PC-3 (cell line): ENCODE measurements at regions of chr5 and their contacts with region 1.

Region 1: DNA sequence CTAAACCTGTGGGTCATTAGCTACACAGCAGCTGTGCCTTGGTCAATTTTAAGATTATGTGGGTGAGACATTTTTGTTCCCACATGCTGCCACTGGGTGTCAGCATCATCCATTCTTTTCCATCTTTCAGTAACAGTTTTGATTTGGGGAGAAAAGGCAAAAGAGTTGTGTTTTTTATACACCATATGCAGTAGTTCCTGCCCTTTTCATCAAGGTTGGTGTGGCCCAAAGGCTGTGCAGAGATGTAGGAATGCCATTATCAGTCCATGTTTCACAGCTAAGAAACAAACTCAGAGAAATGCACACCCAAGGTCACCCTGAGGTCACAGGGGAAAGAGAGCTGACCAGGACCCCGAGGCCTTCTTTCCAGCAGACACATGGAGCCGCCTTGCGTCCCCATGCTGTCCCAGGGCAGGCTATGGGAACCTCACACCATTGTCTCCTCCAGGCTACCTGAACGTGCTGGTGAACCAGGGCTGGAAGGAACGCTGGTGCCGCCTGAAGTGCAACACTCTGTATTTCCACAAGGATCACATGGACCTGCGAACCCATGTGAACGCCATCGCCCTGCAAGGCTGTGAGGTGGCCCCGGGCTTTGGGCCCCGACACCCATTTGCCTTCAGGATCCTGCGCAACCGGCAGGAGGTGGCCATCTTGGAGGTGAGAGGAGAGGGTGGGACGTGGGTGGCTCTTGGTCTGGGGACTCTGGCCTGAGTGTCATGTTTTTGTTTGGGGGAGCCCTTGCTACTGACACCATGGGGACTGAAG is 27.8 kb upstream of the GRPEL2 start:
- DNase-seq: peak; percentile 86
- ATAC-seq: peak; percentile 72
- H3K4me3 ChIP-seq: no peak overlapping the region
- H3K27ac ChIP-seq: no peak overlapping the region
- H3K4me1 ChIP-seq: peaks cover 10% of the 10 kb centered on the region
- H3K27me3 ChIP-seq: no peaks in the 10 kb centered on the region
- CTCF ChIP-seq: peak; percentile 98

Region 2: DNA sequence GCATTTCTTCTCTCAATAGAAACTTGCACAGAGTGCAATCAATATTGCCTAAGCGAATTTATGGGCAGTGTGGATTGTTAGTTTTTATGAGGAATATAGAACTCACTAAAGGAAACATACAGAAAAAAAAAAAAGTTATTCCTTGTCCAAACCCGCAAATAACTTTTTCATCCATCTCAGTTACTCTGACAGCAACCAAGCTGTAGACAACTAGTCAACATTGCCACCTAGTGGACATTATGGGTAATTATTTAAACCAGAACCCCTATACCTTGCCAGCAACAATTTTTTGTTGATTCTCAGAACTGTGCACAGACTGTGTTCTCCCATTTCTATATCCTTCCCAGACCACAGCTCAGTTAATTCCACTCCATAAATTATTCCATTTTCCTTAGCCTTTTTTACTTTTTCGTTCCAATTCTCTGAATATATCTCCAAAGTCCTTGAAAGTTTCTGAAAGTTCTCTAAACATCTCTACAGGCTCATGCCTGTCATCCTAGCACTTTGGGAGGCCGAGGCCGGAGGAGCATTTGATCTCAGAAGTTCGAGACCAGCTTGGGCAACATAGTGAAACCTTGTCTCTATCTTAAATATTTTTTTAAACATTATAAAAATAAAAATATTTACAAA is 48.4 kb before region 1 on chr5:
- CTCF ChIA-PET with region 1: no interaction called
- POLR2A ChIA-PET with region 1: no interaction called
- intact Hi-C with region 1: loop called (anchors 10 kb)
- DNase-seq: peak; percentile 96
- ATAC-seq: 0 out of 2 replicates have a peak, but pooled peaks have one; percentile 3
- H3K4me3 ChIP-seq: no peak overlapping the region
- H3K27ac ChIP-seq: no peak overlapping the region
- H3K4me1 ChIP-seq: peaks cover 28% of the 10 kb centered on the region
- H3K27me3 ChIP-seq: no peaks in the 10 kb centered on the region
- CTCF ChIP-seq: peak; percentile 99

Region 3: GRCh38 chr5:149345147-149345875 is 27.8 kb after region 1 on chr5 and contains the start of gene GRPEL2:
- CTCF ChIA-PET with region 1: interaction called, 4 read pairs
- POLR2A ChIA-PET with region 1: no interaction called
- intact Hi-C with region 1: loop called (anchors 2 kb)
- DNase-seq: peak; percentile 100
- ATAC-seq: peak; percentile 97
- H3K4me3 ChIP-seq: peak within 1 kb of the TSS; percentile 81
- H3K27ac ChIP-seq: peak within 1 kb of the TSS; percentile 42
- H3K4me1 ChIP-seq: peaks cover 22% of the 10 kb centered on the region
- H3K27me3 ChIP-seq: no peaks in the 10 kb centered on the region
- CTCF ChIP-seq: no peak
- total RNA-seq, gene GRPEL2: 43.8 and 49.4 TPM in 2 replicates

Region 4: GRCh38 chr5:149367249-149367971 is 49.9 kb after region 1 on chr5:
- CTCF ChIA-PET with region 1: interaction called, 15 read pairs
- POLR2A ChIA-PET with region 1: no interaction called
- intact Hi-C with region 1: loop called (anchors 1 kb)
- DNase-seq: peak; percentile 95
- ATAC-seq: peak; percentile 76
- H3K4me3 ChIP-seq: no peak overlapping the region
- H3K27ac ChIP-seq: no peak overlapping the region
- H3K4me1 ChIP-seq: no peaks in the 10 kb centered on the region
- H3K27me3 ChIP-seq: no peaks in the 10 kb centered on the region
- CTCF ChIP-seq: peak; percentile 99

Region 5: DNA sequence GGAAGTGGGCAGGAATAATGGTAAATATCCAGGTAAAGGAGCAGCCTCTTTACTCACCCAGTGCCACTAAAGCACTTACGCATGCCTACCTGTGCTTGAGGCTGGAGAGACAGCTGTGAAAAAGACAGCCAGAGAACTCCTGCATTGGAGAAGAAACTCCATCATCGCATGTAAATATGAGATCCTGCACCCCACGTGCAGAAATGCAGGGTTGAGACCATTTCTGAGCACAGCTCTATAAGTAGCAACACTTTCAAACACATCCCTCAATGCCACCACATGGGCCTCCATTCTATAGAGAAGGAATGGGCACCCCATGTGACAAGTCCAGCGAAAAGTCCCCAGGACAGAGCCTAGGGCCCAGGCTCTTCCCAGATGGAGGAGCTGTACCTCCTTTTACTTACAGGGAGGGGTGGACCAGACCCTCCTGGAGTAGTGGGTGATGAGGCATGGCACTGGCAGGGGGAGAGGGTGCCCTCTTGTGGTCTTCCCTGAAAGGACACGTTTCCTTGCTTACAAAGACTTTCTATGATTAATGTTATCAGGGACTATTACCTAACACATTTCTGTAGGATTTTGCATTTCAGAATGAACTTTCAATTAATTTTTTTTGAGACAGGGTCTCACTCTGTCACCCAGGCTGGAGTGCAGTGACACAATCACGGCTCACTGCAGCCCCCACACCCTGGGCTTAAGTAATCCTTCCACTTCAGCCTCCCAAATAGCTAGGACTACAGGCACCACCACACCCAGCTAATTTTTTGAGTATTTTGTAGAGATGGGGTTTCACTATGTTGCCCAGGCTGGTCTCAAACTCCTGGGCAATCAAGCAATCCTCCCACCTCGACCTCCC is 116.9 kb after region 1 on chr5:
- CTCF ChIA-PET with region 1: interaction called, 5 read pairs
- POLR2A ChIA-PET with region 1: no interaction called
- intact Hi-C with region 1: loop called (anchors 1 kb)
- DNase-seq: peak; percentile 84
- ATAC-seq: peak; percentile 14; the same call in 1 of the 2 replicates
- H3K4me3 ChIP-seq: no peak overlapping the region
- H3K27ac ChIP-seq: no peak overlapping the region
- H3K4me1 ChIP-seq: peaks cover 24% of the 10 kb centered on the region
- H3K27me3 ChIP-seq: no peaks in the 10 kb centered on the region
- CTCF ChIP-seq: peak; percentile 98

Region 6: DNA sequence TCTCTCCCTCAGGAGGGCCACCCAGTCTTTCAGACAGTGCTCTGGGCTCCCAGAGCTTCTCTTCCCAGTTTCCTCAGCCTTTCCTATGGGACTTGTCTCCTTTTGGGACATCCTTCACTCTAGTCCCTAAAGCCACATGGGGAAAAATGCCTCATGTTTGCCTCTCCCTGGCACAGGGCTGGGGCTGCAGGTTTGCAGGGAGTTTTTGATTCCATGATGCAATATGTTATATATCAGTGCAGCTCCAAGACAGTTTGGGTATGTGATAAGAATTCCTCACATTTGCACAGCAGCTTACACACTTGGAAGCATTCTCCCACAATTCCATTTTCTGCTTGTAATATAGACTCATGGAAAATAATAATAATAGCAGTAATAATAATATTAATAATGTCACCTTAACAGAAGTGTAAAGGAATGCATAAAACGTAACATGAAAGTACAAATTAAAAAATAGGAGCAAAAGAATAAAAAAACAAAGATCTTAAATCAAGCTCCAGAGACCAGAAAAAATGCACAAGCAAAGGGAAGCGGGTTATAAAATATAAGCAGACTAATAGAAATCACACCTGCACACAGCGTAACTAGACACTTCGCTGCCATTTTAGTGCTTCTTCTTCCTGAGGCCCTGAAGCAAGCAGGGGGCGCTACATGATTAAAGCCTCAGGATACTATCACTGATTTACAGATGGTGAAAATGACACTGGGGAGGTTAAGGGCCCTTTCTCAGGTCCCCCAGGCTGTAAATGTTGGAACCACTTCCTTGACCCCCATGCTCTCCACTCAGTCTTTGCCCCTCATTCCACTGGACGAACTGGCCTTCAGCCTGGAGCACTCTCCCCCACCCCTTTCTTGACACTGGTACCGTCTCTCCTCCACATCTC is 131.6 kb after region 1 on chr5:
- CTCF ChIA-PET with region 1: no interaction called
- POLR2A ChIA-PET with region 1: no interaction called
- intact Hi-C with region 1: no loop called
- DNase-seq: peak; percentile 61
- ATAC-seq: no peak
- H3K4me3 ChIP-seq: no peak overlapping the region
- H3K27ac ChIP-seq: no peak overlapping the region
- H3K4me1 ChIP-seq: peaks cover 21% of the 10 kb centered on the region
- H3K27me3 ChIP-seq: no peaks in the 10 kb centered on the region
- CTCF ChIP-seq: peak; percentile 70